Vagina (tissue), 2 donors: ENCODE measurements at regions of chrX and their contacts with region 1.

Region 1: GRCh38 chrX:21645886-21646285 is 12.2 kb downstream of the KLHL34 start:
- DNase-seq: no peak
- H3K4me3 ChIP-seq: no peak overlapping the region
- H3K27ac ChIP-seq: no peak overlapping the region
- H3K4me1 ChIP-seq: no peaks in the 10 kb centered on the region
- H3K27me3 ChIP-seq: no peaks in the 10 kb centered on the region
- CTCF ChIP-seq: no peak
- POLR2A ChIP-seq: no peak

Region 2: GRCh38 chrX:21666679-21667078 is 20.8 kb after region 1 on chrX:
- intact Hi-C with region 1: loop called (anchors 1 kb)
- DNase-seq: no peak
- H3K4me3 ChIP-seq: no peak overlapping the region
- H3K27ac ChIP-seq: no peak overlapping the region
- H3K4me1 ChIP-seq: no peaks in the 10 kb centered on the region
- H3K27me3 ChIP-seq: no peaks in the 10 kb centered on the region
- CTCF ChIP-seq: no peak
- POLR2A ChIP-seq: no peak